ENCODE measurements at regions of chr12 and their contacts with region 1.

Region 1: DNA sequence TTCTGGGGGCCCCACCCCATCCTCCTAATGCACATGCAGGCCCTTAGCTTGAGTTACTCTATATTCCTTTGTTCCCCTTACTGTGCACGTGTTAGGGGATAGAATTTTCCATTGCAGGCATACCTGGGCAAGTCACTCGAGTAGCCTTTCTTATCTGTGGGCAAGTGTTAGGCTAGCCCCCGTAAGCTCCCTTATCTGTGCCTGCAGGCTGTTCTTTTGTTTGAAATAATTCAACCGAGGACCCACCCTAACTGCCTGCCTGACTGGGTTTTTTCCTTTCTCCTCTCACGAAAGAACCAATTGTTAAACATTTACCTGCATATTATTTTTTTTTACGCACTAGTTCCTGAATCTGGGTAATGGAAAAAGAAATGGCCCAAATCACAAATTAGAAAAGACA is 21.3 kb upstream of the BCAT1 start:
- DNase-seq: no peak
- ATAC-seq: no peak
- H3K4me3 ChIP-seq: no peak overlapping the region
- H3K27ac ChIP-seq: no peak overlapping the region
- H3K4me1 ChIP-seq: no peaks in the 10 kb centered on the region
- H3K27me3 ChIP-seq: no peaks in the 10 kb centered on the region
- CTCF ChIP-seq: no peak

Region 2: GRCh38 chr12:24919346-24920001 is 50.7 kb before region 1 on chr12:
- intact Hi-C with region 1: loop called in 1 of 10 experiments (anchors 2 kb)
- DNase-seq: no peak
- ATAC-seq: no peak
- H3K4me3 ChIP-seq: no peak overlapping the region
- H3K27ac ChIP-seq: no peak overlapping the region
- H3K4me1 ChIP-seq: peaks cover 0 to 15% (median 0%) of the 10 kb centered on the region in 9 donors
- H3K27me3 ChIP-seq: no peaks in the 10 kb centered on the region
- CTCF ChIP-seq: no peak

Region 3: GRCh38 chr12:25005376-25005775 is 35.2 kb after region 1 on chr12:
- intact Hi-C with region 1: no loop called
- DNase-seq: no peak
- ATAC-seq: no peak
- H3K4me3 ChIP-seq: no peak overlapping the region
- H3K27ac ChIP-seq: no peak overlapping the region
- H3K4me1 ChIP-seq: no peaks in the 10 kb centered on the region
- H3K27me3 ChIP-seq: no peaks in the 10 kb centered on the region
- CTCF ChIP-seq: no peak

Measured in heart right ventricle (tissue), 16 donors.